AG04450 (cell line): ENCODE measurements at regions of chr1 and their contacts with region 1.

Region 1: GRCh38 chr1:9110669-9111356 is 18.1 kb downstream of the GPR157 start:
- DNase-seq: peak; percentile 85
- H3K4me3 ChIP-seq: no peak overlapping the region
- H3K27ac ChIP-seq: peak overlapping the region; percentile 11
- H3K27me3 ChIP-seq: no peaks in the 10 kb centered on the region
- CTCF ChIP-seq: peak; percentile 96

Region 2: GRCh38 chr1:8817406-8818324 is 293.1 kb before region 1 on chr1 and contains the start of gene RERE:
- CTCF ChIA-PET with region 1: no interaction called
- POLR2A ChIA-PET with region 1: no interaction called
- DNase-seq: peak; percentile 86
- H3K4me3 ChIP-seq: peak within 1 kb of the TSS; percentile 85
- H3K27ac ChIP-seq: peak within 1 kb of the TSS; percentile 80
- H3K27me3 ChIP-seq: no peaks in the 10 kb centered on the region
- CTCF ChIP-seq: no peak
- polyA plus RNA-seq, gene RERE: 14.3 and 20.6 TPM in 2 replicates

Region 3: GRCh38 chr1:8911416-8911815 is 199.4 kb before region 1 on chr1:
- CTCF ChIA-PET with region 1: interaction called, 11 read pairs
- POLR2A ChIA-PET with region 1: no interaction called
- DNase-seq: no peak
- H3K4me3 ChIP-seq: no peak overlapping the region
- H3K27ac ChIP-seq: peak overlapping the region; percentile 11
- H3K27me3 ChIP-seq: no peaks in the 10 kb centered on the region
- CTCF ChIP-seq: no peak

Region 4: DNA sequence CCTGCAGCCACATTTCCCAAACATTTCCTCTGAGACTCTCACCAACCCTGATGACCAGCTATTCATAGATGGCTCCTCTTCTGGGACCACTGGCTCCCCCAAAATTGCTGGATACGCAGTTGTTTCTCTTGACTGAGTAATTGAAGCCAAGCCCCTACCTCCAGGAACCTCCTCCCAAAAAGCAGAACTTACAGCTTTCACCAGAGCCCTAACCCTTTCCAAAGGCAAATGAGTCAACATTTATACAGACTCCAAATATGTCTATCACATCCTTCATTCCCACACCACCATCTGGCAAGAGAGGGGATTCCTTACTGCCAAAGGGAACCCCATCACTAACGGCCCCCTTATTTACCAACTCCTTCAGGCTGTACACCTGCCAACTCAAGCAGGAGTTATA is 185.4 kb before region 1 on chr1:
- CTCF ChIA-PET with region 1: no interaction called
- POLR2A ChIA-PET with region 1: no interaction called
- DNase-seq: no peak
- H3K4me3 ChIP-seq: no peak overlapping the region
- H3K27ac ChIP-seq: no peak overlapping the region
- H3K27me3 ChIP-seq: peaks cover 20% of the 10 kb centered on the region
- CTCF ChIP-seq: no peak

Region 5: GRCh38 chr1:9121496-9122409 is 10.9 kb after region 1 on chr1:
- CTCF ChIA-PET with region 1: interaction called, 16 read pairs
- POLR2A ChIA-PET with region 1: no interaction called
- DNase-seq: no peak
- H3K4me3 ChIP-seq: no peak overlapping the region
- H3K27ac ChIP-seq: no peak overlapping the region
- H3K27me3 ChIP-seq: no peaks in the 10 kb centered on the region
- CTCF ChIP-seq: no peak

Region 6: DNA sequence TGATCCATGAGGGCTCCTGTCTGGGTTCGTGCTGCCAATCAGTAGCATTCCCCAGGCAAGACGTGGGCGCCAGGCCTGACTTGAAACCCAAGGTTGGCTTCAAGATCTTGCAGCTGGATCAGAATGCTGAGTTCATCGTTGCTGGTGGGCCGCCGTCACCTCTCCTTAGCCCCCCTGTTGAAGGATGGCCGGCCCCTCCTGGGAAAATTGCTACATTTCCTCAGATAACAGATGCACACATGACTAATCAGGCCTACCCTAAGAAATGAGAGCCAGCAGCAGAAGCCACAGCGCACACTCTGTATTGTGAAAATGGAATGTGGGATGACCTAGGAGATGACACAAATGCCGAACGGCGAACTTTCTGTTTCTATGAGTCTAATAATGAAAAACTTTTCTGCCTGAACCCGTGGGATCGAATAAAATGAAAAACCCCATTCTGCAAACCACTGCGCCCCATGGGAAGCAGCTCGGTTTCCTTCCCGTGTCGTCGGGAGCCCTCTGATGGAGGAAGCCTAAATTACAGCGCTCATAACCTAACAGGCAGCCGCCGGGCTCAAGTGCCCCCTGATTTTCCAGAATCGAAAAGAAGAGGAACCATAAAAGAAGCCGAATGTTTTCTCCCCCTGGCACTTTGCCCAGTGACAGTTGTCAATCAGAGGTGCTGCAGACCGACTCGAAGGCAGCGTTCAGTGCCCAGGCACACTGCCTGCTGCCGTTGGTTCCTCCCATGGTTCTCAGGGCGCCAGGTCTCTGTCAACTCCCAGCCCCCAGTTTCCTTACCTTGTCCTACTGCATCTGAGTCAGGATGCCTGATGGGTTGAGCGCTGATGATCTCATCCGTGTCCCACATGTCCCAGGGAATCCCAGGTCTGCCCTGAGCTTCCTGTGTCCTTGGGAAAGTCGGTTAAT is 85.6 kb after region 1 on chr1:
- CTCF ChIA-PET with region 1: interaction called, 10 read pairs
- POLR2A ChIA-PET with region 1: no interaction called
- DNase-seq: peak; percentile 57
- H3K4me3 ChIP-seq: peak overlapping the region; percentile 38
- H3K27ac ChIP-seq: peak overlapping the region; percentile 89
- H3K27me3 ChIP-seq: no peaks in the 10 kb centered on the region
- CTCF ChIP-seq: peak; percentile 81

Region 7: DNA sequence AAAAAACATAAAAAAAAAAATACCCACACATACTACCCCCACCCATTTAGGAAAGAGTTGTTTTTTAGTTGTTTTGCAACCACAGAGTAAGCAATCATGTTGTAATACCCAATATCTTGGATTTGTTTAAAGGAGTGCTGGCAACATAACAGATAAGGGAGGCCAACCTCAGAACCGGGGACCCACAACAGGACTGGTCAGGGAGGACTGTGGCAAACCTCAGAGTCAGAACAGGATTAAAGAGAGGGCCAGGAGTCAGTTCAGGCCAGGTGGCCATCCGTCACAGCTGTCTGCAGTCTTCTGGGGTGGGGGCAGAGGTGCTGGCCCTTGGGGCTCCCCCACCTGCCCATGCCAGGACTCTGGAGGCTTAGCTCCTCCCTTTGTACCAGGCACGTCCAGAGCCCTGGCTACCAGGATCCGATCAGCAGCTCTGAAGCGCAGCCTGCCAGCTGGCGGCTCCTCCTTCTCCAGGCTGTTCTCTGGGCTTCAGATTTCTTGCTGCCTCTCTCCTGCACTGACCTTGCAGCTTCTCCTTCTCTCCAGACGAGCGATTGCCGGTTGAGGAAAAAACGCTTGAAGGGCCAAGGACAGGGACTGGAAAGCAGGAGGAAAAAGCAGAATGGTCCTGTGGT is 131.6 kb after region 1 on chr1:
- CTCF ChIA-PET with region 1: interaction called, 10 read pairs
- POLR2A ChIA-PET with region 1: no interaction called
- DNase-seq: no peak
- H3K4me3 ChIP-seq: no peak overlapping the region
- H3K27ac ChIP-seq: no peak overlapping the region
- H3K27me3 ChIP-seq: no peaks in the 10 kb centered on the region
- CTCF ChIP-seq: no peak

Region 8: DNA sequence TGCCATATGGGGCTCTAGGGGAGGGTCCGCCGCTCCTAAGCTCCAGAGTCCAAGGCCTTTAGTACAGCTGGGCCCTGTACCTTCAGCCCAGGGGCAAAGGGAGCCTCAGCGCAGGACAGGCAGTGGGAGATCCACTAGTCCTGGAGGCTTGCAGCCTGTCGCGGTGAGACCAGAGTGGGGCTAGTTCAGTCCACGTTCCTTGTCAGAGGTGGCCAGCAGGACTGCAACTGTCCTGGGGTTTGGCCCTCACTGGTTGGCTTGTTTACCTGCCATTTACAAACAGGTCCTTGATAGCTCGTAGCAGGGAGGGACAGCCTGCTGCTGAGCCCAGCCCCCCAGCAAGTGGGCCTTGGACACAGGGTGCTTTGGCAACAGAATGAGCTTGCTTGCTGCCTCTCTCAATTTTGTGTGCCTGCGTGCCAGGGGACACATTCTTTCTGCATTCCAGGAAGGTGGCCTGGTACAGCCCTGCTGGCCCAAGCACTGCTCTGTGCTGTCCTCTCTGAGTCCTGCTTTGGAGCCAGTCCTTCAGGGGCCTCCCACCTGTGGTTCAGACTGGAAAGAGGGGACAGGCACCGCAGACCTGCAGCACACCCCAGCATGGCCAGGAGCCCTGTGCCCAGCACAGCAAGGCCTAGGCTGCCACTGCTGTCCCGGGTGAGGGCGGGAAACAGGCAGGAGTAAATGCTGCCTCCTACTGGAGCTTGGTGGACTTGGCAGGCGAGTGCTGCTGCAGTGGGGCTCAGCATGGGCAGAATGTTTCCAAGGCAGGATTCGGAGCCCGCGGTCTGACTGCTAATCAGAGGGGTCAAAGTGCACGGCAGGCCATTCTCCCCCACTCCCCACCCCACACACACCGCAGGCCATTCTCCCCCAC is 139.0 kb after region 1 on chr1:
- CTCF ChIA-PET with region 1: interaction called, 11 read pairs
- POLR2A ChIA-PET with region 1: no interaction called
- DNase-seq: no peak
- H3K4me3 ChIP-seq: no peak overlapping the region
- H3K27ac ChIP-seq: no peak overlapping the region
- H3K27me3 ChIP-seq: no peaks in the 10 kb centered on the region
- CTCF ChIP-seq: peak; percentile 59

Region 9: DNA sequence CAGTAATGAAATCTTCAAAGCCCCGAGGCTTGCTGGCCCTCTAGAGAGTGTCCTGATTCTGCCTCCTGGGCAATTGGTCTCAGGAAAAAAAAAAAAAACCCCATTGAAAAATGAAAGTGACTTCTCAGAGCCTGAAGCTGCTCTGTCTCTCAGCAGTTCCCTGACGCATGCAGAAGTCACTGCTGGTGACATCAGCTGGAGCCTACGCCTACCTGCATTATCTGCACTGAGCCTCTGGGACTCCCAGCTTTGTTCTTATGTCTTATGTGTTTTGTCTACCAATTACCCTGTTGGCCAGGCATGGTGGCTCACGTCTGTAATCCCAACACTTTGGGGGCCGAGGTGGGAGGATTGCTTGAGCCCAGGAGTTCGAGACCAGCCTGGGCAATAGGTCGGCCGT is 418.4 kb after region 1 on chr1:
- CTCF ChIA-PET with region 1: no interaction called
- POLR2A ChIA-PET with region 1: interaction called, 14 read pairs
- DNase-seq: no peak
- H3K4me3 ChIP-seq: no peak overlapping the region
- H3K27ac ChIP-seq: no peak overlapping the region
- H3K27me3 ChIP-seq: peaks cover 4% of the 10 kb centered on the region
- CTCF ChIP-seq: no peak